ENCODE measurements at regions of chr20 and their contacts with region 1.

Region 1: GRCh38 chr20:2713285-2713684 is 20.7 kb downstream of the EBF4 start:
- DNase-seq: no peak
- H3K4me3 Mint-ChIP-seq: no peak overlapping the region
- H3K27ac Mint-ChIP-seq: no peak overlapping the region
- H3K4me1 Mint-ChIP-seq: no peaks in the 10 kb centered on the region
- H3K27me3 Mint-ChIP-seq: peaks cover 4% of the 10 kb centered on the region

Region 2: GRCh38 chr20:1631309-1632151 is 1081.8 kb before region 1 on chr20:
- intact Hi-C with region 1: no loop called
- DNase-seq: no peak
- H3K4me3 Mint-ChIP-seq: no peak overlapping the region
- H3K27ac Mint-ChIP-seq: peak overlapping the region; percentile 76
- H3K4me1 Mint-ChIP-seq: peaks cover 47% of the 10 kb centered on the region
- H3K27me3 Mint-ChIP-seq: no peaks in the 10 kb centered on the region

Region 3: GRCh38 chr20:2742934-2743559 is 29.8 kb after region 1 on chr20:
- intact Hi-C with region 1: loop called (anchors 1 kb)
- DNase-seq: peak; percentile 65
- H3K4me3 Mint-ChIP-seq: peak overlapping the region; percentile 45
- H3K27ac Mint-ChIP-seq: peak overlapping the region; percentile 80
- H3K4me1 Mint-ChIP-seq: peaks cover 30% of the 10 kb centered on the region
- H3K27me3 Mint-ChIP-seq: peaks cover 17% of the 10 kb centered on the region

Region 4: DNA sequence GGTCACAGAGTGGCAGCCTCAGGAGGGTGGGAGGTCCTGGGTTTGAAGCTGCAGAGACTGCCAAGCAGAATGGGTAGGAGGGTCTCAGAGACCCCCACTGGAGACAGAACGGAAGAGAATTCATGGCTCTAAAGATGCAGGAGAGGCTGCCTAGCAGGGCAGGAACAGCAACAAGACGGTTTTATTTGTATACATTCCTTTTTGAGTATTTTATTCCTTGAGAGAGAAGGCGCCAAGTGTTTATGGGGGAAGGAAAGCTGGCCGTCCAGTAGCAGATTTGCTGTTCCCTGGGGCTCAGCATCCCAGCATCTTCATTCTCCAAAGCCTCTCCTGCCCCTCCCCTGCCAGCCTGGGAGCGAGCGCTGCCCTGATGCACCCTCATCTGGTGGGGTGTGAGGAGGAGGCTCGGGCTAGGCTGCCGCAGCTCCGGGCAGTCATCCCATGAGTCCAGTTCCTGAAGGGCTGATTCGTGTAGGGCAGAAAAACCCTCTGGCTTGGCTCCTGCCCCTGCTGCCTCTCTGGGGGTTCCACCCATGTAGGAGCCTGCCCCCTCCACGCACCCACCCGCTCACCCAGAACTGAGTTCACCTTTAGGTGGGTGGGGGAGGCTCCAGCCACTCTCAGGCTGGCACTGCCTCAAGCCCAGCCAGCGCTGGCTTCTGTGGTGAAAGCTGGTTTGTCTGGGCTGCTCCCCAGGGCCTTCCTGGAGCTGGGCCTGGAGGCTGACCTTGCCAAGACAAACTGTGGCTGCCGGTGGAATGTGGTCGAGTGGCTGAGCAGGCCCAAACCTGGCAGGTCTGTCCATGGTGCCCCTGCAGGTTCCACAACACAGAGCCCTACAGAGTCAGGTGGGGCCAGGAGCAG is 54.7 kb after region 1 on chr20:
- intact Hi-C with region 1: no loop called
- DNase-seq: no peak
- H3K4me3 Mint-ChIP-seq: no peak overlapping the region
- H3K27ac Mint-ChIP-seq: no peak overlapping the region
- H3K4me1 Mint-ChIP-seq: no peaks in the 10 kb centered on the region
- H3K27me3 Mint-ChIP-seq: peaks cover 16% of the 10 kb centered on the region

Region 5: GRCh38 chr20:2859330-2860121 is 146.2 kb after region 1 on chr20:
- intact Hi-C with region 1: loop called (anchors 10 kb)
- DNase-seq: no peak
- H3K4me3 Mint-ChIP-seq: no peak overlapping the region
- H3K27ac Mint-ChIP-seq: no peak overlapping the region
- H3K4me1 Mint-ChIP-seq: no peaks in the 10 kb centered on the region
- H3K27me3 Mint-ChIP-seq: no peaks in the 10 kb centered on the region

Measured in activated T-helper 1 cell treated with anti-CD3 and anti-CD28 coated beads, Interleukin-12 subunit alpha, Interleukin-12 subunit beta, Interleukin-2, Interleukin-4 antibody, amounts not matched to agents 30 ng/mL and 10 ng/mL and 1 ng/mL, durations not matched to agents 14 hours and 24 hours and 36 hours (primary cell).